A673 (cell line): ENCODE measurements at regions of chr18 and their contacts with region 1.

Region 1: DNA sequence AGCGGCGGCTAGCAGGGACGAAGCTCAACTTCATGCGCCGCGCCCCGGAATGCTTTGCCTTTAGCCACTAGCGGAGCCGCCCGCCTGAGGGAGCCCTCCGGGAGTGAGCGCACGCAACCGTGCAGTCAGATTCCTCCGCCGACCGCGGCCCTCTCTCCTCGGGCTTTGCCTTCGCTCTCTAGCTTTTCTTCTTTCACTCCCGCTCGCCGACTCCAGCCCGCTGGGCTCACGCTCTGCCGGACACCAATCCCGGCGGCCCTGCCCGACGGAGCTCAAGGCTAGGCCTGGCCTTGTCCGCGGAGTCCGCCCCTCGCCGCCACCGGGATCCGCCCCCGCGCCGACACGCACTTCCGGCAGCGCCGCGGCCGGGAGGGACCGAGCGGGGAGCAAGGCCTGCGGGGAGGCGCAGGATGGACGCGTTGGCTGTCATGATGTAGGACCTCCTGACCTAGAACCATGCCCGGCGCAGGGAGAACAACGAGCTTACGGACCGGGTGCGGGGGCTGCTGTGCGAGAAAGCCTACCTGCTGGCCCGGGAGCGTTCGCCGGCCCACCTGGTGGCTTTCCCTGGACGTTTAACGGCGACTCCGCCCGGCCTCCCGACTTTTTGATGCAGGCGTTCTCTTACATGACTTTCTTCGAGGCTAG is 40.8 kb upstream of the AKAIN1 start:
- DNase-seq: peak; percentile 90
- H3K4me3 ChIP-seq: peak overlapping the region; percentile 70
- H3K27ac ChIP-seq: peak overlapping the region; percentile 100
- H3K4me1 ChIP-seq: peaks cover 13% of the 10 kb centered on the region
- H3K27me3 ChIP-seq: peaks cover 5% of the 10 kb centered on the region
- CTCF ChIP-seq: no peak

Region 2: DNA sequence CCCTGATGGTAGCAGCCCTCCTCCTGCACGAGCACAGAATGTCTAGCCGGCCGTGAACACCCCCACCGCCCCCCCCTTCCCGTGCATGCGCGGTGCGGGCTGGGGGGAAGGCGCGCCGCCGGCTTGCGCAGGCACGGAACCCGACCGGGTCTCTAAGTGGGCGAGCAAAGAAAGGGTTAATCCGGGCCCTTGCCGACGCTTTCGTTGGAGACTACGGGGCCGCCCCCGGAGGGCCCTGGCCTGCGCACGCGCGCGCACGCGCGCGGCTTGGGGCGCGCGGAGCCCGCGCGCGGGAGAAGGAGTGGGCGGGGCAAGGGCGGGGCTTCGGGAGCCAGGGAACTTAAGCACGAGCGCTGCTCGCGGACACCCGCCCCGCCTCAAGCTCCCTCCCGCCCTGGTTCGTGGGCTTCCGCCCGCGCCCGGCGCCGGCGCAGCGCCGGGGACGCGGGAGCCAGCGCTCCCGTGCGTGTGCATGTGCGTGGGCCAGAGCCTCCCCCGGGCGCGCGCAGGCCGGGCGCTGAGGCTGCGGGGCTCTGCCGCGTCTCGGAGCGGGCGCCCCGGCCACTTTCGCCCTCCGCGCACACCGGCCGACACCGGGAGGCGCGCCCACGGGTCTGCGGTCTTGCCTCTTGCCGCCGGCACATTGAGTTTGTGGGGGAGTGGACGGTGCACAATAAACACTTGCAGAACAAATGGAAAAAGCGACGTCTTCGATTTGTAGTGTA is 58.3 kb after region 1 on chr18:
- CTCF ChIA-PET with region 1: no interaction called
- POLR2A ChIA-PET with region 1: no interaction called
- intact Hi-C with region 1: loop called (anchors 5 kb)
- DNase-seq: peak; percentile 97
- H3K4me3 ChIP-seq: peak overlapping the region; percentile 77
- H3K27ac ChIP-seq: peak overlapping the region; percentile 90
- H3K4me1 ChIP-seq: peaks cover 4% of the 10 kb centered on the region
- H3K27me3 ChIP-seq: peaks cover 25% of the 10 kb centered on the region
- CTCF ChIP-seq: no peak

Region 3: DNA sequence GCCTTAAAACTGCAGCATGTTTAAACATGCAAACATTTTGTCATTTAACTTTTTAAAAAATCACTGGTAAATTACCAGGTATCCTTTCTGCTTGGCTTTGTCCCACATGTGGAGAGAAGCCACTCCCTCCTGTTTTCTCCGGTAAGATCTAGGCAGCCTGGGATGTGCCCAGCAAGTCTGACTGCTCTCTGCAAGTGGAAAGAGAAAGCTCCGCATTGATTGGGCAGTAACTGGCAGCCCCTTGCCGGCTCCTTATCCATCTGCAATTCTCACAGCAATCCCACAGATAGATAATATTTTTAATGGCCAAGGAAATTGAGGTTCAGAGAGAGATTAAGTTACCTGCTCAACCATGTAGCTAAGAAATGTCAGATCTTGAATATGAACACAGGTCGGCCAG is 521.3 kb after region 1 on chr18:
- CTCF ChIA-PET with region 1: no interaction called
- POLR2A ChIA-PET with region 1: no interaction called
- intact Hi-C with region 1: no loop called
- DNase-seq: no peak
- H3K4me3 ChIP-seq: no peak overlapping the region
- H3K27ac ChIP-seq: no peak overlapping the region
- H3K4me1 ChIP-seq: no peaks in the 10 kb centered on the region
- H3K27me3 ChIP-seq: peaks cover 3% of the 10 kb centered on the region
- CTCF ChIP-seq: no peak